Panc1 (cell line): ENCODE measurements at regions of chrX and their contacts with region 1.

Region 1: GRCh38 chrX:119516157-119516702 is 48.0 kb downstream of the SLC25A5 start:
- DNase-seq: peak; percentile 62
- ATAC-seq: peak; percentile 89
- H3K4me3 ChIP-seq: no peak overlapping the region
- H3K27ac ChIP-seq: no peak overlapping the region
- H3K4me1 ChIP-seq: peaks cover 6% of the 10 kb centered on the region; the same call in 1 of the 2 replicates
- H3K27me3 ChIP-seq: no peaks in the 10 kb centered on the region
- CTCF ChIP-seq: peak; percentile 90

Region 2: GRCh38 chrX:118644378-118644777 is 871.9 kb before region 1 on chrX:
- CTCF ChIA-PET with region 1: no interaction called
- POLR2A ChIA-PET with region 1: no interaction called
- in situ Hi-C with region 1: no loop called
- intact Hi-C with region 1: no loop called
- DNase-seq: peak; percentile 27
- ATAC-seq: peak; percentile 98
- H3K4me3 ChIP-seq: no peak overlapping the region
- H3K27ac ChIP-seq: no peak overlapping the region
- H3K4me1 ChIP-seq: peaks cover 3% of the 10 kb centered on the region; the same call in 1 of the 2 replicates
- H3K27me3 ChIP-seq: no peaks in the 10 kb centered on the region
- CTCF ChIP-seq: peak; percentile 67; the same call in 1 of the 2 replicates

Region 3: GRCh38 chrX:119442286-119442685 is 73.9 kb before region 1 on chrX:
- CTCF ChIA-PET with region 1: interaction called, 12 read pairs
- POLR2A ChIA-PET with region 1: no interaction called
- in situ Hi-C with region 1: no loop called
- intact Hi-C with region 1: no loop called
- DNase-seq: no peak
- ATAC-seq: no peak
- H3K4me3 ChIP-seq: no peak overlapping the region
- H3K27ac ChIP-seq: no peak overlapping the region
- H3K4me1 ChIP-seq: no peaks in the 10 kb centered on the region
- H3K27me3 ChIP-seq: no peaks in the 10 kb centered on the region
- CTCF ChIP-seq: no peak

Region 4: GRCh38 chrX:119488749-119489148 is 27.5 kb before region 1 on chrX:
- CTCF ChIA-PET with region 1: interaction called, 21 read pairs
- POLR2A ChIA-PET with region 1: no interaction called
- in situ Hi-C with region 1: no loop called
- intact Hi-C with region 1: loop called (anchors 1 kb)
- DNase-seq: no peak
- ATAC-seq: peak; percentile 78; the same call in 1 of the 2 replicates
- H3K4me3 ChIP-seq: no peak overlapping the region
- H3K27ac ChIP-seq: no peak overlapping the region
- H3K4me1 ChIP-seq: no peaks in the 10 kb centered on the region
- H3K27me3 ChIP-seq: no peaks in the 10 kb centered on the region
- CTCF ChIP-seq: peak; percentile 85

Region 5: GRCh38 chrX:119495734-119496726 is 20.2 kb before region 1 on chrX:
- CTCF ChIA-PET with region 1: interaction called, 17 read pairs
- POLR2A ChIA-PET with region 1: interaction called, 8 read pairs
- in situ Hi-C with region 1: no loop called
- intact Hi-C with region 1: no loop called
- DNase-seq: no peak
- ATAC-seq: no peak; the same call in 1 of the 2 replicates
- H3K4me3 ChIP-seq: no peak overlapping the region
- H3K27ac ChIP-seq: no peak overlapping the region
- H3K4me1 ChIP-seq: no peaks in the 10 kb centered on the region
- H3K27me3 ChIP-seq: no peaks in the 10 kb centered on the region
- CTCF ChIP-seq: no peak

Region 6: GRCh38 chrX:119541188-119541587 is 25.0 kb after region 1 on chrX:
- CTCF ChIA-PET with region 1: interaction called, 10 read pairs
- POLR2A ChIA-PET with region 1: no interaction called
- in situ Hi-C with region 1: no loop called
- intact Hi-C with region 1: no loop called
- DNase-seq: peak; percentile 33
- ATAC-seq: peak; percentile 69; the same call in 1 of the 2 replicates
- H3K4me3 ChIP-seq: no peak overlapping the region
- H3K27ac ChIP-seq: no peak overlapping the region
- H3K4me1 ChIP-seq: no peaks in the 10 kb centered on the region
- H3K27me3 ChIP-seq: no peaks in the 10 kb centered on the region
- CTCF ChIP-seq: no peak

Region 7: GRCh38 chrX:119729408-119730201 is 213.4 kb after region 1 on chrX:
- CTCF ChIA-PET with region 1: interaction called, 7 read pairs
- POLR2A ChIA-PET with region 1: no interaction called
- in situ Hi-C with region 1: no loop called
- intact Hi-C with region 1: loop called (anchors 10 kb)
- DNase-seq: peak; percentile 54
- ATAC-seq: peak; percentile 64
- H3K4me3 ChIP-seq: no peak overlapping the region
- H3K27ac ChIP-seq: no peak overlapping the region
- H3K4me1 ChIP-seq: no peaks in the 10 kb centered on the region
- H3K27me3 ChIP-seq: no peaks in the 10 kb centered on the region
- CTCF ChIP-seq: peak; percentile 85